Activated CD4-positive, alpha-beta memory T cell treated with anti-CD3 and anti-CD28 coated beads, Interleukin-2, amount 10 ng/mL, durations not matched to agents 7 days and 5 days (primary cell): ENCODE measurements at regions of chr16 and their contacts with region 1.

Region 1: DNA sequence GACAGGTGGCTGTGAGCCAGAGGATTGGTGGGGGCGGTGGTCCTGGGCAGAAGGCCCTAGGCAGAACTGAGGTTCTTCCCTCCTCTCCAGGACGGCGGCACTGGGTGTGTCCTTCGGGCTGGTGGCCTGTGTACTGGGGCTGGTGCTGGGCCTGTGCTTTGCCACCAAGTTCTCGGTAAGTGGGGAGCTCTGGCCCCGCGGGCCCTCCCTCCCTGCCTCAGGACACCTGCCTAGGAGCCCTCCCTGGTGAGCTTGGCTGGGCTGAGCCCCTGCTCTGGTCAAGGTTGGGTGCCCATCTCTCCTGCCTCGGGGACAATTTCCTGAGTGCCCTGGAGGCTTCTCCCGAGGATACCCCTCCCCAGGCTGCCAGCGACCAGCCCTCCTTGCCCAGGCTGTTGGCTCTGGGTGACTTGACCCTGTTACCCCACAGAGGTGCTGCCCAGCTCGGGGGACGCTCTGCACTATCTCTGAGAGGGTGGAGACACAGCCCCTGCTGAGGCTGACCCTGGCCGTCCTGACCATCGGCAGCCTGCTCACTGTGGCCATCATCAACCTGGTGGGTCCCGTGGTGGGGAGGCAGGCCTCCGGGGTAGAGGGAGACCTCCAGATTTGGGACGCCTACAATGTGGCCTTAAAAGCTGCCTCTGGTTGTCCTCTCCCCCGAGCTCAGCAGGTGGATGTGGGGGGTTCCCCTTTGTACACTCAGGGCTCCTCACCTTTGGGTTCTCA is 42.0 kb downstream of the ADCY7 start:
- DNase-seq: peak; percentile 14
- H3K4me3 Mint-ChIP-seq: no peak overlapping the region
- H3K27ac Mint-ChIP-seq: no peak overlapping the region
- H3K4me1 Mint-ChIP-seq: peaks cover 20% of the 10 kb centered on the region
- H3K27me3 Mint-ChIP-seq: no peaks in the 10 kb centered on the region

Region 2: DNA sequence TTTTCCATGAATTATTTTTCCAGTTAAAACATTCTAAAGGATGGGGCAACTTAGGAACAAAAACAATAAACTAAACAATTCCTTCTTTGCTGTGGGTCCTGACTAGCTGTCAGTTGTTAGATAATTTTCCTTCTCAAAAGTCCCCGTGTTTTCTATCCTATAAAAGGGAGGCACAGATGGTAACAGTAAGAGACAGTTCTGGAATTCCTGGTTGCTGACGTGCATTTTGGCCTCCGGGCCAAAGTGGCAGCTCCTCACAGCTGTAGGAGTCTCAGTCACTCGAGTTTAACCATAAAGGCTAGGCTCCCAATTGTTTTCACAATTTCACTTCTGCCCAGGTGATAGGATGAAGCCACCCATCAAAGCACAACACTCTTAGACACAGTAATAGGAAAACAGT is 375.5 kb before region 1 on chr16:
- CTCF ChIA-PET with region 1: no interaction called
- POLR2A ChIA-PET with region 1: no interaction called
- DNase-seq: no peak
- H3K4me3 Mint-ChIP-seq: no peak overlapping the region
- H3K27ac Mint-ChIP-seq: no peak overlapping the region
- H3K4me1 Mint-ChIP-seq: no peaks in the 10 kb centered on the region
- H3K27me3 Mint-ChIP-seq: peaks cover 21% of the 10 kb centered on the region

Region 3: GRCh38 chr16:50235581-50235980 is 72.8 kb before region 1 on chr16:
- CTCF ChIA-PET with region 1: no interaction called
- POLR2A ChIA-PET with region 1: no interaction called
- DNase-seq: no peak
- H3K4me3 Mint-ChIP-seq: no peak overlapping the region
- H3K27ac Mint-ChIP-seq: no peak overlapping the region
- H3K4me1 Mint-ChIP-seq: peaks cover 5% of the 10 kb centered on the region
- H3K27me3 Mint-ChIP-seq: peaks cover 7% of the 10 kb centered on the region

Region 4: GRCh38 chr16:50273681-50274325 is 34.6 kb before region 1 on chr16:
- CTCF ChIA-PET with region 1: no interaction called
- POLR2A ChIA-PET with region 1: interaction called, 20 read pairs
- DNase-seq: peak; percentile 60
- H3K4me3 Mint-ChIP-seq: peak overlapping the region; percentile 88
- H3K27ac Mint-ChIP-seq: peak overlapping the region; percentile 98
- H3K4me1 Mint-ChIP-seq: peaks cover 98% of the 10 kb centered on the region
- H3K27me3 Mint-ChIP-seq: no peaks in the 10 kb centered on the region